ENCODE measurements at regions of chr12 and their contacts with region 1.

Region 1: DNA sequence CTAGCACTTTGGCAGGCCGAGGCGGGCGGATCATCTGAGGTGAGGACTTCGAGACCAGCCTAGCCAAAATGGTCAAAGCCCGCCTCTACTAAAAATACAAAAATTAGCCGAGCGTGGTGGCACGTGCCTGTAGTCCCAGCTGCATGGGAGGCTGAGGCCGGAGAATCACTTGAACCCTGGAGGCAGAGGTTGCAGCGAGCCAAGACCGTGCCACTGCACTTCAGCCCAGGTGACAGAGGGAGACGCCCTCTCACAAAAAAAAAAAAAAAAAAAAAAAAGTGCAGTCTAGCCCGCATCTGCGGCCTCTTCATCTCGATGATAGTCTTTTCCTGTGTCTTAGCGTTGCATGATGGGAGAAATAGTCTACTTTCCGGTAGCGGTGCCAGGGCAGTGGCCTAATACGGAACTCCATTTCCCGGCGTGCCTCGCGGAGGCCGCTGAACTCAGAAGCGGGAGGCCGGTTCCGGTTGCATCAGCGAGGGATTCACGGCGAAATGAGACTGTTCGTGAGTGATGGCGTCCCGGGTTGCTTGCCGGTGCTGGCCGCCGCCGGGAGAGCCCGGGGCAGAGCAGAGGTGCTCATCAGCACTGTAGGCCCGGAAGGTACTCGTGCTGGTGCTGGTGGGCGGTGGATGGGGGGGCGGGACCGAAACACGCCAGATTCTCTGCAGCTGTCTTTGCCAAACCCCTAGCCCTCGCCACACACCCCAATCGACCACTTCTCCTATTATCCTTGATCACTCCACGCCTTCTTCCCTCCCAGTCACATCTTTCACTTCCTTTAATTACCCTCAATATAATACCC is at the start of gene MARS1:
- DNase-seq: peak; percentile 94 to 97
- ATAC-seq: peak; percentile 97 to 99 (median 98)
- H3K4me3 ChIP-seq: peak within 1 kb of the TSS; percentile 96
- H3K27ac ChIP-seq: peak within 1 kb of the TSS; percentile 76
- H3K4me1 ChIP-seq: peaks cover 10% of the 10 kb centered on the region
- H3K27me3 ChIP-seq: no peaks in the 10 kb centered on the region
- CTCF ChIP-seq: no peak
- total RNA-seq, gene MARS1: 68.6 to 88.0 (median 83.7) TPM

Region 2: DNA sequence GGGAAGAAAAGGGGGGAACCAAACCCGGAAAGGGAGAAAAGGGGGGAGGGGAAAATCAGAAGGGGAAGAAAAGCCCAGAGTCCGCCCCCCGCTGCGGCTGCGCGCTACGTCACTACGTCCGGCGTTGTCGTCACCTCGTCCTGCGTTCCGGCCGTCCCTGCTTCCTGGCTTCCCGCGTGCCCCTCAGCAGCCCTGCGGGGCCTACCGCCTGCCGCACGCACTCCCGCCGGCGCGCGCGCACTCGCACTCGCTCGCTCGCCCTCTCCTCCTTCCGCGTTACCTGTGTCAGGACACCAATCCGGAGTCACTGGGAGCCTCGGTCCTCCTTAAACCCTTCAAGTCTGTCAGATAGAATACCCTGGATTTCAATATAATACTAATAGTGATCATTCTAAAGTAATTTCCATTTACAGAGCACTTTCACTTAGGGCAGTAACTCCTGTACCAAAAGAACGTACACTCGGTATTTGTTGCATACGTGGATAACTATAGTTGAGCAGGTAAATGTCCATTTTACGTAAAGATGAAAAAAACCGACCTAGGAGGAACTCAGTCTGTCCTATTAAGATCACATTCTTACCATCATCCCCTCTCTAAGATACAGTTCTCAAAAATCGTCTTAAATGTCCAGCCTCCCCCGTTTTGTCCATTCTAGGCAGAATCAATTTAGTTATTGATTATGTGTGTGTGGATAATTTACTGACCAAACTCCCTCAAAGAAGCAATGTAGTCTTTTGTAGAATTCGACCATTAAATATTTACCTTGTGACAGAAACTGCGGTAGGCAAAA is 56.7 kb before region 1 on chr12 and contains the start of gene R3HDM2:
- intact Hi-C with region 1: no loop called
- DNase-seq: peak; percentile 96 to 98
- ATAC-seq: peak; percentile 98 to 99 (median 98)
- H3K4me3 ChIP-seq: peak within 1 kb of the TSS; percentile 79
- H3K27ac ChIP-seq: peak within 1 kb of the TSS; percentile 95
- H3K4me1 ChIP-seq: peaks cover 6% of the 10 kb centered on the region
- H3K27me3 ChIP-seq: no peaks in the 10 kb centered on the region
- CTCF ChIP-seq: no peak
- total RNA-seq, gene R3HDM2: 41.4 to 64.9 (median 45.0) TPM

Region 3: DNA sequence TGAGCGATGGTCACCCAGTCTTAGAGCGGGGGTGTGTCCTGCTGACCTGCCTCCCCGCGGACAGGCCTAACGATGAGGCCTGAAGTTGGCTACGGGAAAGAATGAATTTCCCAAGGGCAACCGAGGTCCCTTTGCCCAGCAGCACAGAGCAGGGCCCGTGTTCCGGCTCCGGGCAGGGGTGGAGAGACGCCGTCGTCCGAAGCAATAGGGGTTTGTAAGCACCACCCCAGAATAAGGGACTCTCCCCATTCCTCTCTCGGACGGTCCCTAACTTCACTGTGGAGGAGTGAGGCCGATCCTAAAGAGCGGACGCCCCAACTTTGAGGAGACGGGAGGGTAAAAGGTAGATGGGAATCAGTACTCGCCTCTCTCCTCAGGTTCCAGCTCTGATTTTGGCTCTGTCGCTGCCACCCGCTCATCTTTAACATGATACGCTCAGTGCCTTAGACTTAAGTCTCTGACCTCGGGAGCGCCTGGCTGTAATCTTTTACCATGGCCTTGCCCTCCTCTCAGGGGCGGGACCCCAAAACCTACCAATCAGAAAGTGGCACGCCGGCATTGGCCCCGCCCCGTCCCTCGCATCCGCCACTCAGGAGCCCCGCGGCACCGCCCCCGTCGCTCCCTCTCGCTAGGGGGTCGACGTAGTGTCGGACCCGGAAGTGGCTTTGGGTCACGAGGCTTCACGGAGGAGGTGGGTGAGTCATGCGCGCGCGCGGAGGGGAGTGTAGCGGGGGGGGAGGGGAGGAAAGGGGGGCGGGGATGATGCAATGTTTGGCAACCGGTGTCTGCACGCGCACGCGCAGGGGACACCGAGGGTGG is 32.5 kb after region 1 on chr12 and contains the start of gene DDIT3:
- intact Hi-C with region 1: loop called in 1 of 2 experiments (anchors 5 kb)
- DNase-seq: peak; percentile 100
- ATAC-seq: peak; percentile 81 to 85 (median 82)
- H3K4me3 ChIP-seq: peak within 1 kb of the TSS; percentile 96
- H3K27ac ChIP-seq: peak within 1 kb of the TSS; percentile 100
- H3K4me1 ChIP-seq: peaks cover 50% of the 10 kb centered on the region
- H3K27me3 ChIP-seq: no peaks in the 10 kb centered on the region
- CTCF ChIP-seq: no peak
- total RNA-seq, gene DDIT3: 11.1 to 59.5 (median 19.6) TPM

Measured in psoas muscle (tissue), 8 donors.